GM13976 (cell line): ENCODE measurements at regions of chr6 and their contacts with region 1.

Region 1: DNA sequence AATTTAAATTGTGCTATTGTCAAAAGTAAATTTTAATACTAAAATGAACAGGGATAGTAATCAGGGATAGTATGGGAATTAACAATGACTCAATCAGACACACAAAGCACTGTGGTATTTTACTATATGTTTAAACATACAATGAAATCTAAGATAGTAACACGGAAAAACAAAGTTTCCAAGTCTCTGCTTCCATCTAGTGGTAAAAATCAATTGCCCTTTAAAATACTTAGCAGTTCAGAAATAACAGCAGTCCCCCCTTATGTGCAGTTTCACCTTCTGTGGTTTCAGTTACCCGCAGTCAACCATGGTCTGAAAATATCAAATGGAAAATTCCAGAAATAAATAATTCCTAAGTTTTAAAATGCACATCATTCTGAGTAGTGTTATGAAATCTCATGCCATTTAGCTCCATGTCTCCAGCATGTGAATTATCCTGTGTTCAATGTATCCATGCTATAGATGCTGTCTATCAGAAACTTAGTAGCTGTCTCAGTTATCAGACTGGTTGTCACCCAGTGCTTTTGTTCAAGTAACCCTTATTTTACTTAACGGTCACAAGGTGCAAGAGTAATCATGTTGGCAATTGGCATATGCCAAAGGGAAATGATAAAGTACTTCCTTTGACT is 58.5 kb downstream of the AHI1 start:
- DNase-seq: peak; percentile 27
- CTCF ChIP-seq: peak; percentile 59

Region 2: GRCh38 chr6:135002229-135002844 is 436.7 kb before region 1 on chr6:
- in situ Hi-C with region 1: loop called (anchors 25 kb)
- DNase-seq: no peak
- CTCF ChIP-seq: no peak

Region 3: DNA sequence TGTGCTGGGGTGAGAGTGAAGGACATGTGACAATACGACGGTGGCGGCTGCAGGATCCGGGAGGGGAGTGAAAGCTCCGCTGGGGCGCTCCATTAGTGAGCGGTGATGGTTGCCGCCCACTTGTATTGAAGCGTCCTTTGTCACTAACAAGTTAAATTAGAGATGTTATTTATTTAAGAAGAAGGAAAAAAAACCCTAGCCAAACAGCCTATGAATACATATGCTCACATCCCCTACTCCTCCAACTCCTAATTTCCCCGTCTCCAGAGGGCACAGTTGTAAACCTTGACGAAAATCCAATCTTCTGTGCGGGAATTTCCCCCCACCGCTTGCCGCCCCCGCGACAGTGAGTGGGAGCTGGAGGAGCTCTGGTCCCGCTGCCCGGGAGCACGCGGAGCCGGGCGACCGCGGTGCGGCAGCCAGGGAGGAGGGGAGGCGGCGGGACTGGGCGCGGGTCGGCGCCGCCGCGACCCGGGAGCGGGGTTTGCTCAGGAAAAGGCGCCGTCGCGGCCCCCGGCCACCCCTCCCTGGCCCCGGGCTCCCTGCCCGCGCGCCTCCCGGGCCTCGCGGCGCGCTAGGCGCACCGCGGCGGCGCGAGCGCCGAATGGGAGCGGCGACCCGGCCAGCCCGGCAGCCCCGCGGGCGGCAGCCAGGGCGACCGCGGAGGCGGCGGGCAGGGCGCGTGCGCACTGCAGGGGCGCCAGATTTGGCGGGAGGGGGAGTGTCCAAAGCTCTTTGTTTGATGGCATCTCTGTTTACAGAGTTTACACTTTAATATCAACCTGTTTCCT is 258.3 kb before region 1 on chr6 and contains the start of gene MYB:
- in situ Hi-C with region 1: loop called (anchors 25 kb)
- DNase-seq: peak; percentile 87
- CTCF ChIP-seq: no peak

Region 4: GRCh38 chr6:135209803-135210202 is 229.2 kb before region 1 on chr6:
- in situ Hi-C with region 1: no loop called
- DNase-seq: no peak
- CTCF ChIP-seq: no peak

Region 5: GRCh38 chr6:135909737-135910387 is 470.8 kb after region 1 on chr6:
- in situ Hi-C with region 1: no loop called
- DNase-seq: peak; percentile 66
- CTCF ChIP-seq: peak; percentile 62